Testis (tissue), 5 donors: ENCODE measurements at regions of chr6 and their contacts with region 1.

Region 1: DNA sequence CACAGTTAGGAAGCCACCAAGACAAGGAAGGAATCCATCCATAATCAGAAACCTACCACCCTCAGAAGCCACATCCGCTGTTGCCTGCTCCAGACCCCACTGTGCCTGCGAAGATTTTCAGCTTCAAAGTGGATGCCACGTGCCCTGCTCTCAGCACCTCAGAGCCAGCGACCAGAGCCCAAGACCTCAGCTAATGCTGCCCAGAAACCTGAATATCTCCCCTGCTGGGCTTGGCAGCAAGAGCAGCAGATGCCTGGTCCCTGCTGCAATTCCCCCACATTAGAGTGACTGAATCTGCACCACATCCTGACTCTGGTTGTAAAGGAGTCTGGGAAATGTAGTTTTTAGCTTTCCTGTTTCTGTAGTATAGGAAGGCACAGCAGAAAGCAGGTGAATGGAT is 10.7 kb upstream of the ULBP3 start:
- DNase-seq: no peak
- H3K4me3 ChIP-seq: no peak overlapping the region
- H3K27ac ChIP-seq: no peak overlapping the region
- H3K4me1 ChIP-seq: peaks cover 5% of the 10 kb centered on the region
- H3K27me3 ChIP-seq: no peaks in the 10 kb centered on the region
- CTCF ChIP-seq: no peak
- POLR2A ChIP-seq: no peak

Region 2: GRCh38 chr6:149450679-149451360 is 628.8 kb before region 1 on chr6:
- intact Hi-C with region 1: no loop called
- DNase-seq: peak; percentile 62
- H3K4me3 ChIP-seq: peak overlapping the region; percentile 31 to 56
- H3K27ac ChIP-seq: no peak overlapping the region
- H3K4me1 ChIP-seq: peaks cover 21% of the 10 kb centered on the region
- H3K27me3 ChIP-seq: no peaks in the 10 kb centered on the region
- CTCF ChIP-seq: no peak
- POLR2A ChIP-seq: no peak

Region 3: DNA sequence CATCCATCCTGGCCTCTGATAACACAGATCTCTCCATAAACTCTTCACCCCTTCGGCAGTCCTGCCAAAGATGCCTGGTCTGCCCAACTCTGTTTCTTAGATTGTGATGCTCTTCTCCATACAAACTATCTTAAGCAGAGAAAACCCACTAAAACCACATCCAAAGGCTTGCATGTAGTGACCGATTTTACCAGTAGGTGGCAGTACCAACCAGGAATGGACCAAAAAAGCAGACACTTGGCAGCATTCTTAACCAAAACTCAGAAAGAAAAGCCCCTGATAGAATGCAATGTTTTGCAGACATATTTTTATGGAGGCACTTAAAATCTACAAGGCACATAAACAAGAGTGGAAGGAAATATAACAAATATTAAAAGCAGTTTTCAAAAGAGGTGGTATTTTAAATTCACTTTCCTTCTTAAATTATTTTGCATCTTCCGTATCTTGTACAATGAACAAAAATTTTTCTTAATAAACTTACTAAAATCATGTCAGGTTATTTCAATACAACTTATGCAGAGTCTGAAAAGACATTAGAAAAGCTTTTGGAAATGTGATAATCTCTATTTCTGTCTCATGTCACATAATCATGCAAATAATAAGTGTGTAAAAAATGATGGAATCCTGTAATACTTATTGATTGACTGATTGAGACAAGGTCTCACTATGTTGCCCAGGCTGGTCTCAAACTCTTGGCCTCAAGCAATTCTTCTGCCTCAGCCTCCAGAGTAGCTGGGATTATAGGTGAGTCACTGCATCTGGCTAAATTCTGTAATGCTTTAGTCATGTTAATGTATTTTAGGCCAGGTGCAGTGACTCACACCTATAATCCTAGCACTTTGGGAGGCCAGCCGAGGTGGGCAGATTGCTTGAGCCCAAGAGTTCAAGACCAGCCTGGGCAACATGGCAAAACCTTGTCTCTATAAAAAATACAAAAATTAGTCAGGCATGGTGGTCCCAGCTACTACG is 244.8 kb before region 1 on chr6:
- intact Hi-C with region 1: no loop called
- DNase-seq: peak; percentile 83
- H3K4me3 ChIP-seq: no peak overlapping the region
- H3K27ac ChIP-seq: no peak overlapping the region
- H3K4me1 ChIP-seq: no peaks in the 10 kb centered on the region
- H3K27me3 ChIP-seq: no peaks in the 10 kb centered on the region
- CTCF ChIP-seq: peak; percentile 88 to 94 (median 88)
- POLR2A ChIP-seq: no peak

Region 4: GRCh38 chr6:150334790-150335783 is 255.5 kb after region 1 on chr6:
- intact Hi-C with region 1: loop called (anchors 5 kb)
- DNase-seq: peak; percentile 84
- H3K4me3 ChIP-seq: no peak overlapping the region
- H3K27ac ChIP-seq: no peak overlapping the region
- H3K4me1 ChIP-seq: no peaks in the 10 kb centered on the region
- H3K27me3 ChIP-seq: no peaks in the 10 kb centered on the region
- CTCF ChIP-seq: peak; percentile 78 to 92 (median 89)
- POLR2A ChIP-seq: no peak